ENCODE measurements at regions of chr3 and their contacts with region 1.

Region 1: GRCh38 chr3:58659051-58659675 is 7.4 kb downstream of the FAM3D start:
- DNase-seq: peak; percentile 57 to 58
- ATAC-seq: peak; percentile 37

Region 2: GRCh38 chr3:58491506-58492402 is 167.4 kb before region 1 on chr3 and contains the start of gene KCTD6:
- intact Hi-C with region 1: no loop called
- DNase-seq: peak; percentile 89 to 95
- ATAC-seq: peak; percentile 92
- total RNA-seq, gene KCTD6: 5.7 to 6.3 TPM

Region 3: GRCh38 chr3:58824285-58824684 is 165.1 kb after region 1 on chr3:
- intact Hi-C with region 1: no loop called
- DNase-seq: peak; percentile 67 to 89
- ATAC-seq: peak; percentile 96

Region 4: GRCh38 chr3:59049671-59050331 is 390.6 kb after region 1 on chr3 and contains the start of gene CFAP20DC:
- intact Hi-C with region 1: loop called in 1 of 2 experiments (anchors 10 kb)
- DNase-seq: peak; percentile 90 to 93
- ATAC-seq: peak; percentile 98
- total RNA-seq, gene CFAP20DC: 0.98 to 1.6 TPM

Region 5: DNA sequence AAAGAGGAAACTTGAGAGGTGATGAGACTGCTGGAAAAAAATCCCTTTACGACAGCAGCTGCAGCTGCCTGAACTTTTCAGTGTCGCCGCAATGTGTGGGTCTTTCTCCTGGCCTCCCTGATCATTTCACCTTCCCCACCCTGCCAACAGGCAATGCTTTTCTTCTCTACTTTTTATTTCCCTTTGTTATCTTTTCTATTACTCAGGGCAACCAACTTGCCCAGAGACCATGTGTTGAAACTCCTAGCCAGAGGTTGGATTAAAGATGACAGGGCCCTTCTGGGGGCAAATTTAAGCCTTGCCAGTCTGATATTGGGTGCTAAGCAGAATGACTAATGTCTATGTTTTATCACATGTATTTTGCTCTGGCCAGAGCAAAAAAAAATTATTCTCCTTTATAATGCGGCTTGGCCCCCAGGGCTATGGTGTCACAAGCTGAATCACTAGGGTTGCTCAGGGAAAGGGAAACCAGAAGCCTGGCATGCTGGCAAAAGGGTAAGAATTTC is 442.1 kb after region 1 on chr3:
- intact Hi-C with region 1: no loop called
- DNase-seq: no peak
- ATAC-seq: no peak

Measured in left colon (tissue), 2 donors.